ENCODE measurements at regions of chr19 and their contacts with region 1.

Region 1: GRCh38 chr19:18058208-18059030 is 28.3 kb downstream of the IL12RB1 start:
- DNase-seq: peak; percentile 96

Region 2: GRCh38 chr19:17947815-17948513 is 110.5 kb before region 1 on chr19:
- intact Hi-C with region 1: loop called (anchors 10 kb)
- DNase-seq: peak; percentile 97

Region 3: GRCh38 chr19:18007044-18007916 is 51.1 kb before region 1 on chr19:
- intact Hi-C with region 1: loop called (anchors 2 kb)
- DNase-seq: peak; percentile 95

Measured in posterior vena cava (tissue), 2 donors.